Heart left ventricle (tissue), 16 donors: ENCODE measurements at regions of chr7 and their contacts with region 1.

Region 1: DNA sequence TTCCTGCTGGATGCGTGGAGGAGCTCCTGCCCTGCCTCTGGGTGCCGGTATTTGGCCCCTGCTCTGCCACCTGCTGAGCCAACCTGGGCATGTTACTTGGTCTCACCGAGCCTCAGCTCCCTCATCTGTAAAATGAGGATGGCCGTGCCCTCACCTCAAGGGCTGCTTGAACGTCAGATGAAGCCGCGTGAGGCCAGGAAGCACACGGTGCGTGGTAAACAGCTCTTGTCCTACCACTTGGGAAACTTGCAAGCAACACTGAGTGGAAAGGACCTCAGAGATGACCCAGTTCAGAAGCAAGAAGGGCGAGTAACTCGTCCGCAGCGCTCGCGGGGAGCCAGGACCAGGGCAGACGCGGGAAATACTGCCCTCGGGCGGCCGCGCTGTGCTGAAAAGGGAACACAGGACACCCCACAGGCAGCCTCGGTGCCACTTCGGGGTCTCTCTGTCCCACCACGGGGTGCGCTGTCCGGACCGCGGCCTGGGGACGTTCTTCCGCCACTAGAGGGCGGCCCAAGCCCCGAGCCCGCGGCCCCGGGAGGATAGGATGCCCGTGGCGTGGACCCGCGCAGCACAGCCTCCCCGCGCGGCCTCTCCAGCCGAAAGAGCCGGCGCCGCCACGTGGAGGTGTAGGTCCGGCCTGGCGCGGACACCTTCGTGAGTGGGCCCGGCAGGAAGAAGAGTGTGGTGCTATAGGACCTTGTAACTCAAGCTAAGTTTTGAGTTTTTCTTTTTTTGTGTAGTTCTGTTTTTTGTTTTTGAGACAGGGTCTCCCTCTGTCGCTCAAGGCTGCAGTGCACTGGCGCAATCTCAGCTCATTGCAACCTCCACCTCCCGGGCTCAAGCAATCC is 94.1 kb downstream of the PRKAG2 start:
- DNase-seq: peak; percentile 63 to 89 (median 74)
- ATAC-seq: peak; percentile 76 to 91 (median 88)
- H3K4me3 ChIP-seq: peak overlapping the region in 10 of 12 donors; percentile 1 to 47 (median 28)
- H3K27ac ChIP-seq: no peak overlapping the region
- H3K4me1 ChIP-seq: peaks cover 0 to 12% (median 8%) of the 10 kb centered on the region in 12 donors
- H3K27me3 ChIP-seq: no peaks in the 10 kb centered on the region
- CTCF ChIP-seq: peak in 11 of 12 donors; percentile 79 to 96 (median 90)
- POLR2A ChIP-seq: no peak

Region 2: GRCh38 chr7:151851145-151851751 is 68.4 kb after region 1 on chr7:
- intact Hi-C with region 1: loop called in 1 of 10 experiments (anchors 10 kb)
- DNase-seq: peak in 2 of 5 donors; percentile 46 to 55
- ATAC-seq: peak; percentile 40 to 58 (median 40)
- H3K4me3 ChIP-seq: peak overlapping the region in 5 of 12 donors; percentile 2 to 43 (median 15)
- H3K27ac ChIP-seq: peak overlapping the region in 3 of 12 donors; percentile 5 to 85 (median 25)
- H3K4me1 ChIP-seq: peaks cover 0 to 39% (median 4%) of the 10 kb centered on the region in 12 donors
- H3K27me3 ChIP-seq: no peaks in the 10 kb centered on the region
- CTCF ChIP-seq: no peak
- POLR2A ChIP-seq: no peak

Region 3: GRCh38 chr7:151871921-151872320 is 89.1 kb after region 1 on chr7:
- intact Hi-C with region 1: loop called in 3 of 10 experiments (anchors 5 to 10 kb)
- DNase-seq: peak in 2 of 5 donors; percentile 25 to 27
- ATAC-seq: no peak
- H3K4me3 ChIP-seq: no peak overlapping the region
- H3K27ac ChIP-seq: no peak overlapping the region
- H3K4me1 ChIP-seq: peaks cover 0 to 58% (median 30%) of the 10 kb centered on the region in 12 donors
- H3K27me3 ChIP-seq: peaks cover 0 to 3% (median 0%) of the 10 kb centered on the region in 9 donors
- CTCF ChIP-seq: no peak
- POLR2A ChIP-seq: no peak

Region 4: GRCh38 chr7:151876899-151877777 is 94.3 kb after region 1 on chr7 and contains the start of gene PRKAG2:
- intact Hi-C with region 1: loop called in 3 of 10 experiments (anchors 5 to 10 kb)
- DNase-seq: peak; percentile 62 to 88 (median 75)
- ATAC-seq: peak; percentile 17 to 61 (median 55)
- H3K4me3 ChIP-seq: peak within 1 kb of the TSS; percentile 47 to 94 (median 80)
- H3K27ac ChIP-seq: peak within 1 kb of the TSS; percentile 88 to 97 (median 92)
- H3K4me1 ChIP-seq: peaks cover 0 to 33% (median 16%) of the 10 kb centered on the region in 12 donors
- H3K27me3 ChIP-seq: peaks cover 0 to 3% (median 0%) of the 10 kb centered on the region in 9 donors
- CTCF ChIP-seq: peak in 2 of 12 donors; percentile 9 to 29
- POLR2A ChIP-seq: peak in 1 of 2 donors; percentile 40
- total RNA-seq, gene PRKAG2: 50.2 to 179 (median 108) TPM

Region 5: DNA sequence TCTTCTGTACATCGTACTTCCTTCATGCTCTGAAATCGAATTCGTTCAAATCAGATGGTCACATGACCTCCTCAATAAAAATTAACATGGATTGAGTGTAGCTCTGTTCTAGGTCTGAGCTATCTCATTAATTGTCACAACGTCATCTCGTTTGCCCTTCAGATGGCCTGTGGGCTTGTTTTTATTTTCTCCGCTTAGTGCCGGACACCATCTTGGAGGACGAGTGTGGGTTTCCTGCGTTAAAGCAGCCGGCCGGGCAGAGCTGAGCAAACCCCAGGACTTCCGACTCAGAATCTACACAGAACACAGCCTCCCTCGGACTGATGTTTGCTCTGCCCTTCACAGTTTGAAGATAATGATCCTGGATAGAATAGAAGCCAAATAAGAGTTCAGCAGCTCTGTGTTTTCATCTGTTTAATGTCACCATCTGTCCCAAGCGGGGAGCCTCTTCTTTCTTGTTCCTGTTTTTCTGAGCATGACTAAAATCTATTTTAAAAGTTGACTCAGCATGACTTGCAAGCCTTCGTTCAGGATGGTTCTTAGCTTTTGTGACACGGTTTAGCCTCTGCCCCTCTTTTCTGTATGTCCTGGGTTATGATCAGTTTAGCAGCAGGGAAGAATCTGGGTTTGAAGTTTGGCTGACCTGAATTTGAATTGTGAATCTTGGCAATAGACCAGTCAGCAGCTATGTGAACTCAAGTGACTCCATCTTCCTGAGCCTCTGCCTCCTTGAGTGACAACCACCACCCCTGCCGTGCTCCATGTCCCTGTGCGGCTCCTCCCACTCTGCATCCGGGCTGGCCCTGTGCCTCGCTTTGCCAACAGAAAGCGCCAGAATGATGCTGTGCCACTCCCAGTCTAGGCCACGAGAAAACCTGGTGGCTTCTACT is 142.9 kb after region 1 on chr7:
- intact Hi-C with region 1: loop called in 8 of 10 experiments (anchors 5 to 10 kb)
- DNase-seq: peak; percentile 34 to 82 (median 61)
- ATAC-seq: peak; percentile 33 to 77 (median 70)
- H3K4me3 ChIP-seq: peak overlapping the region in 2 of 12 donors; percentile 19 to 23
- H3K27ac ChIP-seq: peak overlapping the region in 9 of 12 donors; percentile 4 to 85 (median 42)
- H3K4me1 ChIP-seq: peaks cover 0 to 55% (median 4%) of the 10 kb centered on the region in 12 donors
- H3K27me3 ChIP-seq: no peaks in the 10 kb centered on the region
- CTCF ChIP-seq: no peak
- POLR2A ChIP-seq: no peak

Region 6: DNA sequence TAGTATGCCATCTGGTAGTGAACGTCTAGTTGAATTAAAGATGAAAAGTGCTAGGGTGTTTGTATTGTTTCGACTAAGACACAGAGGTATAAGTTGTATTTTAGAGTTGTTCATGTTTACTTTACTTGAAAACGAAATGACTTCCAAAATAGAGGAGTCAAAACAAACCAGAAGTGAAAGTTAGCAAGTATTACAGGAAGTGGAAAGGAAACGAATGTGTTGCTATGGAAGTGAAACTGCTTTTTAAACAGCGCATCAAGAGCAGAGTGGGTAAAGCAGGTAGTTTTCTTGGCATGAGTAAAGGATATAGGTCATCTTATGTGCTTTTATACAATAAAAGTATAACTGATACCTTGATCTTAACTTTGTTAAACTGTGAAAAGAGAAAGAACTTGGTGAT is 153.4 kb after region 1 on chr7:
- intact Hi-C with region 1: loop called in 9 of 10 experiments (anchors 2 to 10 kb)
- DNase-seq: no peak
- ATAC-seq: peak in 1 of 4 donors; percentile 35
- H3K4me3 ChIP-seq: no peak overlapping the region
- H3K27ac ChIP-seq: peak overlapping the region in 1 of 12 donors; percentile 89
- H3K4me1 ChIP-seq: peaks cover 0 to 38% (median 0%) of the 10 kb centered on the region in 12 donors
- H3K27me3 ChIP-seq: peaks cover 0 to 5% (median 0%) of the 10 kb centered on the region in 9 donors
- CTCF ChIP-seq: no peak
- POLR2A ChIP-seq: no peak

Region 7: GRCh38 chr7:152145853-152146466 is 363.1 kb after region 1 on chr7:
- intact Hi-C with region 1: loop called in 2 of 10 experiments (anchors 5 to 10 kb)
- DNase-seq: no peak
- ATAC-seq: peak; percentile 32 to 71 (median 68)
- H3K4me3 ChIP-seq: no peak overlapping the region
- H3K27ac ChIP-seq: peak overlapping the region in 2 of 12 donors; percentile 44 to 50
- H3K4me1 ChIP-seq: peaks cover 0 to 42% (median 16%) of the 10 kb centered on the region in 12 donors
- H3K27me3 ChIP-seq: no peaks in the 10 kb centered on the region
- CTCF ChIP-seq: peak; percentile 45 to 70 (median 59)
- POLR2A ChIP-seq: no peak